Left cardiac atrium (tissue), 4 donors: ENCODE measurements at regions of chr18 and their contacts with region 1.

Region 1: GRCh38 chr18:35949903-35950627 is 22.4 kb upstream of the RMP24 start:
- DNase-seq: peak; percentile 51
- ATAC-seq: peak; percentile 87 to 91

Region 2: DNA sequence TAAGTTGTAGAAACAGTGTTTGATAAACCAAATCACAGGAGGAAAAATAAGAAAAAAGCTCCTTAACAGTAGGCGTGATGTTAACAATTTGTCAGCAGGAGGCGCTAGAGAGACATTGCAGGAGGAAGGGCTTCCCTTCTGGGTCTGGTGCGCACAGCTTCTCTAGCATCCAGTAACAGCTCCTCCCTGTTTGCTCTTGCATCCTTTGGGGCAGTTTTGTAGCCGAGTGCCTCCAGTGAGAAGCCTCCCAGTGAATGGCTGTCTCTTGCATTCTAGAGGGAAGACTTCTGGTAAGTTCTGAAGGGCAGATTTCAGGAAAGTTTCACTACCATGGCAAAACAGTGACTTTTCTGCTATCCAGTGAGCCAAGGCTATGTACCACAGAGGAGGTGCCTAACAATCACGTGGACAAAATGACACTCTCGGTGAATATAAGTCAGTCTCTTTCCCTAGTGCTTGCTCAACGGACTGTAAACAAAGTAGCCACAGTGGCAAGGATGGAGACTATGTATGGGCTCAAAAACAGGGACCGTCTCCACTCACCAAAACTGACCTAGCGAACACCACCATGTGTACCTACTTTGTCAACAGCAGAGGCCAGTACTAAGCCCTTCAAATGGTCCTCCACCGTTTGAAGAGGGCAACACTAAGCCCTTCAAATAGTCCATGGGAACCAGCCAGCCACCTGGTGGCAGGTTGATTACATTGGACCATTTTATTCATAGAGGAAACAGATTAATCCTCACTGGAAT is 563.3 kb before region 1 on chr18:
- intact Hi-C with region 1: loop called in 1 of 2 experiments (anchors 10 kb)
- DNase-seq: peak; percentile 67
- ATAC-seq: peak; percentile 69 to 74

Region 3: GRCh38 chr18:35756506-35757117 is 193.5 kb before region 1 on chr18:
- intact Hi-C with region 1: loop called (anchors 1 to 5 kb)
- DNase-seq: no peak
- ATAC-seq: peak; percentile 70 to 78

Region 4: DNA sequence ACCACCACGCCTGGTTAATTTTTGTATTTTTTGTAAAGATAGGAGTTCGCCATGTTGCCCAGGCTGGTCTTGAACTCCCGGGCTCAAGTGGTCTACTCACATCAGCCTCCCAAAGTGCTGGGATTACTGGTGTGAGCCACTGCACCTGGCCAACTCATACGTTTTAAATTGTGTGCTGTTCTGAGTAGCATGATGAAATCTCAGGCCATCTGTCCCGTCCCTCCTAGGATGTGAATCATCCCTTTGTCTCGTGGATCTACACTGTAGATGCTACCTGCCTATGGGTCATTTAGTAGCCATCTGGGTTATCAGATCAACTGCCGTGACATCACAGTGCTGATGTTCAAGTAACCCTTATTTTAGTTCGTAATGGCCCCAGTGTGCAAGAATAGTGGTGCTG is 16.1 kb before region 1 on chr18:
- intact Hi-C with region 1: no loop called
- DNase-seq: no peak
- ATAC-seq: no peak